ENCODE measurements at regions of chr4 and their contacts with region 1.

Region 1: DNA sequence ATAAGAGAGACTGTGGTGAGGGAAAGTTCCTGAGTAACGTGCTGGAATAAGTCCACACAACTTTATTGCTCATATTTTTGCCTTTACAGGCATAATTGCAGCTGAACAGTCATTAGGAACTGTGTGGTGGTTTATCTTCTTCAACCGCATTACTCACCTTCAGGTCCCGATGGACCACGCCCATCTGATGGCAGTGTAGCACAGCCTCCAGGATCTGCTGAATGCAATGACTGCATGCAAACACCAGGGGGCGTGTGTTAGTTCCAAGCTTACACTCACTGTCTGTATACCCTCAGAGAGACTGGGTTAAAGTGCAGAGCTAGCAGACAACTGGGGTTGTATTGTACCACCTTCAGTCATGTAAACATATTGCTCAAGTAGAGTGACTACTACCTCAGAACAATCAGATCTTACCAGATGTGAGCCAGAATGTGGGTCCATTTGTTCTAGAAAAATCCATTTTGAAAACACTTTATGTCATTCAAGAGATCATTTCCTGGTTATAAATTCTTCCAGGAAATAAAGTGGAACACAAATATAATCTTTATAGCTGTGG is 214.0 kb downstream of the CAMK2D start:
- DNase-seq: peak; percentile 74 to 94 (median 80)
- H3K4me3 ChIP-seq: no peak overlapping the region
- H3K4me3 Mint-ChIP-seq: no peak overlapping the region
- H3K27ac ChIP-seq: no peak overlapping the region
- H3K27ac Mint-ChIP-seq: peak overlapping the region in 7 of 8 donors; percentile 0 to 75 (median 17)
- H3K4me1 ChIP-seq: peaks cover 8% of the 10 kb centered on the region
- H3K4me1 Mint-ChIP-seq: peaks cover 13 to 16% (median 15%) of the 10 kb centered on the region in 3 donors
- H3K27me3 ChIP-seq: no peaks in the 10 kb centered on the region
- H3K27me3 Mint-ChIP-seq: no peaks in the 10 kb centered on the region

Region 2: DNA sequence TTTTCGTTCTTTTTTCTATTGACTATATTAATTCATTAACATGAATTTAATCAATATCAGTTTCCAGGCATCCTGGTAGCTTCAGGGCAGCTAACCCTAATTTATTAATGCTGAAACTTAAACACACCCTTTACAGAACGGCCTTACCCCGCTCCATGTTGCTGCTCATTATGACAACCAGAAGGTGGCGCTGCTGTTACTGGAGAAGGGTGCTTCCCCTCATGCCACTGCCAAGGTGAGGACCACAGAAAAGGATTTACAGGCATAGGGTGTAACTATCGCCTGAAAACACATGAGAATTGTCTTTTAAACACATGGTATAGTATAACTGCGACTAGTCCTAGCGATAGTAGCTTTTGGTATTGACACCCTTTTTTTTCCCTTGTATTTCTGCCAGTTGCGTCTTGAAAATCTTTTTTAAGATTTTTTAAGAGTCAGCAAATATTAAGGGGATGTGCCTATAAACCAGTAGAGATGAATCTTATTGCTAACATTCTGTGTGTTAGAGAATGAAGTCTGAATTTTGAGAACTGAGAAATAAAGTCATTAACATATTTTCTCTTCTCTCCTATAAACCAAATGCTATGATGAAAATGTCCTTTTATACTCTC is 269.1 kb before region 1 on chr4:
- CTCF ChIA-PET with region 1: no interaction called
- POLR2A ChIA-PET with region 1: no interaction called
- DNase-seq: peak in 4 of 5 donors; percentile 7 to 55 (median 14)
- H3K4me3 ChIP-seq: no peak overlapping the region
- H3K4me3 Mint-ChIP-seq: no peak overlapping the region
- H3K27ac ChIP-seq: no peak overlapping the region
- H3K27ac Mint-ChIP-seq: no peak overlapping the region
- H3K4me1 ChIP-seq: no peaks in the 10 kb centered on the region
- H3K4me1 Mint-ChIP-seq: no peaks in the 10 kb centered on the region
- H3K27me3 ChIP-seq: no peaks in the 10 kb centered on the region
- H3K27me3 Mint-ChIP-seq: peaks cover 0 to 15% of the 10 kb centered on the region in 2 donors

Region 3: DNA sequence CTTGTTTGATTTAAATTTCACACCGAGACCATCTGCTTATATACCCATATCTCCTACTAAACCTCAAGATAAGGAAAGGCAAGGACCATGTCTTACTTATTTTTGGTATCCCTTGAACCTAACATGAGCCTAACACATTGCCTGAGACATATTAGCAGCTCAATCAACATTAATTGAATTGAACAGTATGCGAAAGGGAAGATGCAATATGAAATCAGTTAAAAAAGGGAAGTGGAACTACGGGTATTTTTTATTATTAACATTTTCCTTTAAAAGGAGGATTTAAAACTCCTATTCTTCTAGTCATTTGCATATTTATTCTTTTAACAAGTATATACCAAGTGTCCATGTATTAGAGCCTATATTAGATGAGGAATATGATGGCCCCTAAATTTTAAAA is 16.9 kb after region 1 on chr4:
- CTCF ChIA-PET with region 1: interaction called, 25 read pairs
- POLR2A ChIA-PET with region 1: interaction called, 4 read pairs
- DNase-seq: no peak
- H3K4me3 ChIP-seq: no peak overlapping the region
- H3K4me3 Mint-ChIP-seq: peak overlapping the region in 6 of 7 donors; percentile 58 to 74 (median 65)
- H3K27ac ChIP-seq: no peak overlapping the region
- H3K27ac Mint-ChIP-seq: peak overlapping the region in 2 of 8 donors; percentile 8 to 60
- H3K4me1 ChIP-seq: peaks cover 36% of the 10 kb centered on the region
- H3K4me1 Mint-ChIP-seq: peaks cover 38 to 54% (median 44%) of the 10 kb centered on the region in 3 donors
- H3K27me3 ChIP-seq: no peaks in the 10 kb centered on the region
- H3K27me3 Mint-ChIP-seq: no peaks in the 10 kb centered on the region

Region 4: DNA sequence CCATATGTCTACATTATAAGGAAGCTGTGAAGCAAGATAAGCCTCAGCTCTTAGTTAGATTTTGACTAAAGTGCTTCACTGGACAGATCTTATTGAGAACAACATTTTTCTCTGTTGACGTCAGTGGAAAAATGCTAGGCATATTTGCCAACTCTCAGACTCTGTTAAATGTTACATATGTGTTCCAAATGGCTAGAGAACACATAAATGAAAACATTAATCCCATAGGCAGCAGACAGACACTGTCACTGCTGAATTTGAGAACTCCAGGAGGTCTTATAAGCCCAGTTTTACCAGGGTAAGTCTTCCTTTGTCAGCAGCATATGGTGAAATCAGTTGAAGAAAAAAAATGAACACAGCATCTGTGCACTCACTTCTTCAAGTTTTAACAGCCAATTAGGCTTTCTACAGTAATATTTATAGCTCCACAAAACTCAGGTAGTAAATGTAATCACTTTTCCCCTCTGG is 27.1 kb after region 1 on chr4:
- CTCF ChIA-PET with region 1: interaction called, 11 read pairs
- POLR2A ChIA-PET with region 1: no interaction called
- DNase-seq: no peak
- H3K4me3 ChIP-seq: no peak overlapping the region
- H3K4me3 Mint-ChIP-seq: no peak overlapping the region
- H3K27ac ChIP-seq: no peak overlapping the region
- H3K27ac Mint-ChIP-seq: peak overlapping the region in 1 of 8 donors; percentile 42
- H3K4me1 ChIP-seq: peaks cover 29% of the 10 kb centered on the region
- H3K4me1 Mint-ChIP-seq: peaks cover 53 to 79% (median 72%) of the 10 kb centered on the region in 3 donors
- H3K27me3 ChIP-seq: no peaks in the 10 kb centered on the region
- H3K27me3 Mint-ChIP-seq: no peaks in the 10 kb centered on the region

Region 5: GRCh38 chr4:113761620-113762185 is 214.1 kb after region 1 on chr4 and contains the start of gene CAMK2D:
- CTCF ChIA-PET with region 1: interaction called, 15 read pairs
- POLR2A ChIA-PET with region 1: interaction called, 5 read pairs
- DNase-seq: peak; percentile 71 to 88 (median 86)
- H3K4me3 ChIP-seq: peak within 1 kb of the TSS; percentile 79
- H3K4me3 Mint-ChIP-seq: peak within 1 kb of the TSS; percentile 94 to 99 (median 96)
- H3K27ac ChIP-seq: peak within 1 kb of the TSS; percentile 97
- H3K27ac Mint-ChIP-seq: peak within 1 kb of the TSS; percentile 94 to 100 (median 99)
- H3K4me1 ChIP-seq: peaks cover 23% of the 10 kb centered on the region
- H3K4me1 Mint-ChIP-seq: peaks cover 34 to 47% (median 39%) of the 10 kb centered on the region in 3 donors
- H3K27me3 ChIP-seq: no peaks in the 10 kb centered on the region
- H3K27me3 Mint-ChIP-seq: peaks cover 0 to 1% of the 10 kb centered on the region in 2 donors
- total RNA-seq, gene CAMK2D: 56.0 to 57.6 TPM

Region 6: GRCh38 chr4:114076899-114077570 is 529.5 kb after region 1 on chr4:
- CTCF ChIA-PET with region 1: interaction called, 12 read pairs
- POLR2A ChIA-PET with region 1: no interaction called
- DNase-seq: no peak
- H3K4me3 ChIP-seq: no peak overlapping the region
- H3K4me3 Mint-ChIP-seq: no peak overlapping the region
- H3K27ac ChIP-seq: no peak overlapping the region
- H3K27ac Mint-ChIP-seq: peak overlapping the region in 1 of 8 donors; percentile 41
- H3K4me1 ChIP-seq: no peaks in the 10 kb centered on the region
- H3K4me1 Mint-ChIP-seq: no peaks in the 10 kb centered on the region
- H3K27me3 ChIP-seq: no peaks in the 10 kb centered on the region
- H3K27me3 Mint-ChIP-seq: peaks cover 5 to 8% of the 10 kb centered on the region in 2 donors

Measured in CD8-positive, alpha-beta memory T cell (primary cell).